ENCODE measurements at regions of chr13 and their contacts with region 1.

Region 1: DNA sequence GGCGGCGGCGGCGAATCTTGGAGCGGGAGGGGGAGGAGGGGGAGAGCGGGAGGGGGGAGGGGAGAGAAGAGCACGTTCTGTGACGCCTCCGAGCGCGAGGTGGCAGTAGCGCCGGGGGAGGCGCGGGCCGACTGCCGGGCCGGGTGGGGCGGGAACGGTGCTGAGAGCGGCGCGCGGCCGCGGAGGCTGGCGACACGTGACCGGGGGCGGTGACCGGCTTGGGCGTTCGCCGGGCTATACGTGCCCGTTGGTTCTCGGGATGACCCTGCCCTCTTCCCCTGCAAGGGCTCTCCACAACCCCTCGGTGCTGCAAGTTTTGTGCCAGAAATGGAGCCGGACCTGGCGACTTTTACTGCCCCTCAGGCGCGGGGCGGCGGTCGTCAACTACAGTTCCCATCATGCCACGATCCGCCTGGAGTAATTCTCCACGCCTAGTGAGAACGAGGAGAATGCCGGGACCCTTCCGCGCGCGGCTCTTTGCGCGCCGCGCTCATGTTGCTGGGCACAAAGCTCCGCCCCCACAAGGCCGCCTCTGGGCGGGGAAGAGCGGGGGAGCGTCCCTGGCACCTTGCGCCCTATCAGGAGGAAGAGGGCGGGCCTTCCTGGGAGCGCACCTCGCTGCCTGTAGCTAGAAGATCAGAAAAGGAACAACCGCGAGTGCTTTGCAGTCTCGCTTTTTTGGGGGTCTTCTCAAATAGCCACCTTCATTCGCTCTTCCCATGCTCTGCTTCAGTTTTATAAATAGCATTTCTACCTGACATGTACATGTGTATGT is at the start of gene KPNA3:
- DNase-seq: peak; percentile 90 to 98 (median 96)
- H3K4me3 ChIP-seq: peak within 1 kb of the TSS; percentile 70 to 99 (median 86)
- H3K27ac ChIP-seq: peak within 1 kb of the TSS; percentile 80 to 98 (median 95)
- H3K27me3 ChIP-seq: no peaks in the 10 kb centered on the region
- CTCF ChIP-seq: peak in 49 of 56 donors; percentile 15 to 64 (median 41)
- total RNA-seq, gene KPNA3: 25.3 to 46.1 (median 35.7) TPM

Region 2: DNA sequence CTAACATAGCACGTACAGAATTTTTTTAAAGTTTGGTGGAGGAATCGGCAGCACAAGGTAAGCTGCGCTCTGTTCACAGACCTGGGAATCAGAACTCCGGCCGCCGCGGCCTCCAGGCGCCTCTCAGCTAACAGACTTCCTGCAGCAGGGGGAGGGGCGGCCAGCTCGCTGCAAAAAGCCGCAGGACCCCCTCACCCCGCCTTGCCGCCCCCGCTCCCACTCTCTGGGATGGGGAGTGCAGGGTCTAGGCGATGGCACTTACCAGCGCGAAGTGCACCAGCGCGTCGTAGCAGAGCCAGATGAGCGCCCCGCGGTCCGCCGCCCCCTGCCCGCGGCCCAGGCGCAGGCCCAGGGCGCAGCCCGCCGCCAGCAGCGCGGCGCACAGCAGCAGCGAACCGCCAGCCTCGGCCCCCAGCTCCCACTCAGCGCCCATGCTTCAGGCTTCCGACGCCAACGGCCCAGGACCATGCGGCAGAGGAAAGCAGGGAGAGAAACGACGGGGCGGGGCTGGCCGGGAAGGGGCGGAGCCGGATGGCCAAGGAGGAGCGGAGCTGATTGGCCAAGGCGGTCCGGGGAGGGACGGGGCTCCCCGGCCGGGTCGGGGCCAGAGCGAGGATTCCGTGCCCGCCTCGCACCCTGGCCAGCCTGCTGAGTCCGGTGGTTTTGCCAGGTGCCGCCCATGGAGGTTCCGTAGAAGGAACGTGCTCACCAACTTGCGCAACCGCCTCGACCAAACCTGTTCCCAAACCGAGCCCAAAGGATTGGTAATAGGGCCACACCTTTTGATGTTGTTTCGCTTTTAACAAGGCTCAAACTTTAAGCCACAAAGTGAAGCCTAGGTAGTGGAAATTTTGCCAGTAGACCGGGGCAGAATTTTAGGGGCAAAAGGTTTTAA is 101.5 kb before region 1 on chr13 and contains the start of gene EBPL:
- intact Hi-C with region 1: loop called (anchors 1 to 5 kb)
- DNase-seq: peak; percentile 65 to 95 (median 86)
- H3K4me3 ChIP-seq: peak within 1 kb of the TSS; percentile 57 to 93 (median 78)
- H3K27ac ChIP-seq: peak within 1 kb of the TSS in 44 of 59 donors; percentile 6 to 85 (median 66)
- H3K27me3 ChIP-seq: no peaks in the 10 kb centered on the region
- CTCF ChIP-seq: peak in 5 of 56 donors; percentile 8 to 21 (median 17)
- total RNA-seq, gene EBPL: 7.7 to 28.0 (median 16.7) TPM

Region 3: DNA sequence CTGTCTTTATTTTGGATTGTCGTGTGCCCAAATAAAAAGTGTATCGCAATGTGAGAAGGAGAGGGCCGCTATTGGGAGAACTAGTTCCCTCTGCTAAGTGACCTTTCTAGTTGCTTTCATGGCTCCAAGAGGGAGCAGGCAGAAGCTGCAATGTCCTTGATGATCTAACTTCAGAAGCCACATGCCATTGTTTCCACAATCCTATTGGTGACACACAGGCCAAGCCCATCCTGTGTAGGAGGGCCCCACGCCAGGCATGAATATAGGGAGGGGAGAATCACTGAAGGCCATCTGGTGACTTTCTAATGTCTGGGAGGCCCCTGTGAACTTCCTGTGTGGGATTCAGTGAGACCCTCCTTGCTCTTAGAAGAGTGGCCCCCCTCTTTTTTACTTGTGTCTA is 47.5 kb after region 1 on chr13:
- intact Hi-C with region 1: loop called (anchors 5 to 10 kb)
- DNase-seq: no peak
- H3K4me3 ChIP-seq: no peak overlapping the region
- H3K27ac ChIP-seq: no peak overlapping the region
- H3K27me3 ChIP-seq: no peaks in the 10 kb centered on the region
- CTCF ChIP-seq: no peak

Region 4: GRCh38 chr13:49936085-49936940 is 143.6 kb after region 1 on chr13 and contains the start of gene SPRYD7:
- intact Hi-C with region 1: loop called (anchors 2 kb)
- DNase-seq: peak; percentile 96 to 99 (median 98)
- H3K4me3 ChIP-seq: peak within 1 kb of the TSS; percentile 56 to 97 (median 86)
- H3K27ac ChIP-seq: peak within 1 kb of the TSS in 58 of 59 donors; percentile 50 to 94 (median 88)
- H3K27me3 ChIP-seq: no peaks in the 10 kb centered on the region
- CTCF ChIP-seq: peak; percentile 68 to 99 (median 92)
- total RNA-seq, gene SPRYD7: 11.6 to 33.4 (median 22.1) TPM

Measured in dorsolateral prefrontal cortex (tissue), 120 donors.